Gastrocnemius medialis (tissue), 4 donors: ENCODE measurements at regions of chr4 and their contacts with region 1.

Region 1: DNA sequence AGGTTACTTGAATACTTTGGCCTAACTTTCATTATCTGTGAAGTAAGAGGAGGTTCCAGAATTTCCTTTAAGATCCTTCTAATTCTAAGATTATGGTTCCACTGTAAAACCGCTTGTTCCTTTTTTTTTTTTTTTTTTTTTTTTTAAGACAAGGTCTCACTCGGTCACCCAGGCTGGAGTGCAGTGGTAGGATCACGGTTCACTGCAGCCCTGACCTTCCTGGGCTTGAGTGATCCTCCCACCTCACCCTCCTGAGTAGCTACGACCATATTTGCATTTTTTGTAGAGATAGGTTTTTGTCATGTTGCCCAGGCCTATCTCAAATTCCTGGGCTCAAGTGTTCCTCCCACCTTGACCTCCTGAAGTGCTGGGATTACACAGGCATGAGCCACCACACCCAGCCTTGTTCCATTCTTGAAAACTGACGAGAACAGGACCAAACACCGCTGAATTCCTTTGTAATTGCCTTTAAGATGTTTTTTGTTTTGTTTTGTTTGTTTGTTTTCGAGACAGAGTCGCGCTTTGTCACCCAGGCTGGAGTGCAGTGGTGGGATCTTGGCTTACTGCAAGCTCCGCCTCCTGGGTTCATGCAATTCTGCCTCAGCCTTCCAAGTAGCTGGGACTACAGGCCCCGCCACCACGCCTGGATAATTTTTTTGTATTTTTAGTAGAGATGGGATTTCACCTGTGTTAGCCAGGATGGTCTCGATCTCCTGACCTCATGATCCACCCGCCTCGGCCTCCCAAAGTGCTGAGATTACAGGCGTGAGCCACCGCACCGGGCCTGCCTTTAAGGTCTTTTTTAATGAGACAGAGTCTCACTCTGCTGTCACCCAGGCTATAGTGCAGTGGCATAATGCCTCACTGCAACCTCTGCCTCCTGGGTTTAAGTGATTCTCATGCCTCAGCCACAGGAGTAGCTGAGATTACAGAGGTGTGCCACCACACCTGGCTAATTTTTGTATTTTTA is 6.8 kb downstream of the PDS5A start:
- DNase-seq: no peak
- ATAC-seq: no peak
- H3K4me3 ChIP-seq: no peak overlapping the region
- H3K27ac ChIP-seq: no peak overlapping the region
- H3K4me1 ChIP-seq: peaks cover 7 to 11% of the 10 kb centered on the region in 2 donors
- H3K27me3 ChIP-seq: no peaks in the 10 kb centered on the region
- CTCF ChIP-seq: no peak
- POLR2A ChIP-seq: no peak

Region 2: GRCh38 chr4:39689970-39690369 is 281.0 kb before region 1 on chr4:
- in situ Hi-C with region 1: loop called (anchors 5 to 10 kb)
- intact Hi-C with region 1: no loop called
- DNase-seq: no peak
- ATAC-seq: no peak
- H3K4me3 ChIP-seq: no peak overlapping the region
- H3K27ac ChIP-seq: no peak overlapping the region
- H3K4me1 ChIP-seq: no peaks in the 10 kb centered on the region
- H3K27me3 ChIP-seq: no peaks in the 10 kb centered on the region
- CTCF ChIP-seq: no peak
- POLR2A ChIP-seq: no peak

Region 3: GRCh38 chr4:39846120-39846519 is 124.8 kb before region 1 on chr4:
- in situ Hi-C with region 1: no loop called
- intact Hi-C with region 1: loop called (anchors 5 kb)
- DNase-seq: peak in 1 of 2 donors; percentile 53
- ATAC-seq: peak in 1 of 2 donors; percentile 65
- H3K4me3 ChIP-seq: no peak overlapping the region
- H3K27ac ChIP-seq: peak overlapping the region in 1 of 4 donors; percentile 28
- H3K4me1 ChIP-seq: no peaks in the 10 kb centered on the region
- H3K27me3 ChIP-seq: no peaks in the 10 kb centered on the region
- CTCF ChIP-seq: no peak
- POLR2A ChIP-seq: no peak

Region 4: DNA sequence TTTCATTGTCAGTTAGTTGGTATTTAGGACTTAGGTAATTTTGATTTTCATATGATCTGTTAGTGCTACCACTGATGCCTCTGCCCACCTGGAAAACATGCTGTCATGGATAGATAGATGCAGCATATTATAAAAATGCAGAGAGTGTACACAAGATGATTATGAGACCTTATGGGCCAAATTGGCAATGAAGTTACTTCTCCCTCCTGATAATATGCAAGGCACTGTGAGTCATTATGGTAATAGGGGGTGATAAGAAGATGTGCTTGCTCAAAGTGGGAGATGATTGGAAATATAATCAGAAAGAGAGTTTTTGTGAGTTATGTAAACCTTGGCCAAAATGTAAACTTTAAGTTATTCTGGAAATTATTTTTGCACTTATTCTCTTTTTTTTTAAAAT is 169.2 kb after region 1 on chr4:
- in situ Hi-C with region 1: no loop called
- intact Hi-C with region 1: no loop called
- DNase-seq: no peak
- ATAC-seq: no peak
- H3K4me3 ChIP-seq: no peak overlapping the region
- H3K27ac ChIP-seq: no peak overlapping the region
- H3K4me1 ChIP-seq: no peaks in the 10 kb centered on the region
- H3K27me3 ChIP-seq: no peaks in the 10 kb centered on the region
- CTCF ChIP-seq: no peak
- POLR2A ChIP-seq: no peak